ENCODE measurements at regions of chr12 and their contacts with region 1.

Region 1: DNA sequence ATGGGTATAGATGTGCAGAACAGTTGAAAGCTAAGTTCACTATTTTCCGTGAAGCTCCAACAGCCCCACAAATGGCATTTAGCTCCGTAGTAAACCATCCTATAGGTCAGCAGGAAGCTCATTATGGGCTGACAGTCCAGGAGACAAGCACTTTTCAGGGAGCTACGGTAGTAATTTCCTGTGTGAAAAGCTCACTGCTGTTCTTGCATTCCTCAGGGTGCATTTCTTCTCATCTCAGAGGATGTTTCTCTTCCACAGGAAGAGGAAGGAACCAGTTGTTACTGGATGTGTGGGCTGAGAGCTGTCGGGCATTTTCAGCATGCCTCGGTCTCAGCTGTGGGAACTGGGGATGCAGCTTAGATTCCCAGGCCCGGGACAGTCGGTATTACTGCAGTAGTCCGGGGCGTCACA is 72.8 kb downstream of the GALNT4 start:
- DNase-seq: peak; percentile 87
- ATAC-seq: peak; percentile 50
- H3K4me3 ChIP-seq: no peak overlapping the region
- H3K27ac ChIP-seq: peak overlapping the region; percentile 82
- H3K4me1 ChIP-seq: peaks cover 22% of the 10 kb centered on the region
- H3K27me3 ChIP-seq: no peaks in the 10 kb centered on the region
- CTCF ChIP-seq: no peak
- POLR2A ChIP-seq: no peak
- RAD21 ChIP-seq: 0 out of 2 replicates have a peak, but pooled peaks have one; percentile 13

Region 2: GRCh38 chr12:88703790-88704189 is 748.1 kb before region 1 on chr12:
- CTCF ChIA-PET with region 1: no interaction called
- POLR2A ChIA-PET with region 1: no interaction called
- dilution Hi-C with region 1: no loop called
- in situ Hi-C with region 1: no loop called
- intact Hi-C with region 1: no loop called
- DNase-seq: no peak
- ATAC-seq: no peak
- H3K4me3 ChIP-seq: no peak overlapping the region
- H3K27ac ChIP-seq: no peak overlapping the region
- H3K4me1 ChIP-seq: no peaks in the 10 kb centered on the region
- H3K27me3 ChIP-seq: no peaks in the 10 kb centered on the region
- CTCF ChIP-seq: no peak
- POLR2A ChIP-seq: no peak
- RAD21 ChIP-seq: no peak

Region 3: GRCh38 chr12:89051065-89051677 is 400.7 kb before region 1 on chr12:
- CTCF ChIA-PET with region 1: no interaction called
- POLR2A ChIA-PET with region 1: no interaction called
- dilution Hi-C with region 1: loop called (anchors 25 kb)
- in situ Hi-C with region 1: loop called (anchors 10 kb)
- intact Hi-C with region 1: no loop called
- DNase-seq: peak; percentile 78
- ATAC-seq: peak; percentile 63
- H3K4me3 ChIP-seq: no peak overlapping the region
- H3K27ac ChIP-seq: no peak overlapping the region
- H3K4me1 ChIP-seq: no peaks in the 10 kb centered on the region
- H3K27me3 ChIP-seq: no peaks in the 10 kb centered on the region
- CTCF ChIP-seq: peak; percentile 88
- POLR2A ChIP-seq: no peak
- RAD21 ChIP-seq: peak; percentile 90

Region 4: GRCh38 chr12:89244536-89244935 is 207.3 kb before region 1 on chr12:
- CTCF ChIA-PET with region 1: no interaction called
- POLR2A ChIA-PET with region 1: no interaction called
- dilution Hi-C with region 1: no loop called
- in situ Hi-C with region 1: no loop called
- intact Hi-C with region 1: loop called (anchors 10 kb)
- DNase-seq: peak; percentile 64
- ATAC-seq: peak; percentile 68
- H3K4me3 ChIP-seq: no peak overlapping the region; the same call in 1 of the 2 replicates
- H3K27ac ChIP-seq: peak overlapping the region; percentile 29
- H3K4me1 ChIP-seq: peaks cover 11% of the 10 kb centered on the region
- H3K27me3 ChIP-seq: no peaks in the 10 kb centered on the region
- CTCF ChIP-seq: no peak
- POLR2A ChIP-seq: no peak
- RAD21 ChIP-seq: no peak

Region 5: GRCh38 chr12:89384050-89384758 is 67.6 kb before region 1 on chr12:
- CTCF ChIA-PET with region 1: no interaction called
- POLR2A ChIA-PET with region 1: interaction called, 8 read pairs
- dilution Hi-C with region 1: no loop called
- in situ Hi-C with region 1: no loop called
- intact Hi-C with region 1: loop called (anchors 2 kb)
- DNase-seq: peak; percentile 92
- ATAC-seq: peak; percentile 83
- H3K4me3 ChIP-seq: no peak overlapping the region
- H3K27ac ChIP-seq: peak overlapping the region; percentile 88
- H3K4me1 ChIP-seq: peaks cover 12% of the 10 kb centered on the region
- H3K27me3 ChIP-seq: no peaks in the 10 kb centered on the region
- CTCF ChIP-seq: no peak
- POLR2A ChIP-seq: no peak
- RAD21 ChIP-seq: no peak

Measured in IMR-90 (cell line).